ENCODE measurements at regions of chr10 and their contacts with region 1.

Region 1: GRCh38 chr10:112026438-112026837 is 157.1 kb downstream of the GPAM start:
- DNase-seq: no peak
- H3K4me3 ChIP-seq: no peak overlapping the region
- H3K27ac ChIP-seq: no peak overlapping the region
- H3K4me1 ChIP-seq: no peaks in the 10 kb centered on the region
- H3K27me3 ChIP-seq: no peaks in the 10 kb centered on the region
- CTCF ChIP-seq: peak in 2 of 3 experiments; percentile 57 to 61; a peak in 3 of 4 replicates
- EP300 ChIP-seq: no peak
- POLR2A ChIP-seq: no peak
- RAD21 ChIP-seq: peak; percentile 38 to 61; a peak in 3 of 4 replicates

Region 2: DNA sequence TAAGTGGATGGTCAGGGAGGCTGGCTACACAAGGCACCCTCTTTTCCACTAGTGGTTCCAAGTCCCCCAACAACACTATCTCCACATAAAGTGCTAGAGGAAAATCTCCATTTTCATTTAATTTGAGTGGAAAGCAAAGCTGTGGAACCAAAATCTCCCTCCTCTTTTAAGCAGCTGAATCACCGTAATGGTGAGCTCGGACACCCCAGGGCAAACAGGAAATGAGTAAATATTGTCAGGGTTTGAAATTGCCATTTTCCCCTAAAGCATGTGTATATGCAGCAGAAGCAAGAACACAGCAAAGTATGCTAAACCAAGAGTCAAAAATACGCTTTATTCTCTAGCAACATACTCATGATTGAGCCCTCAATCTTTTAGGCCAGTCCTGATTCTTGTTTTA is 13.4 kb after region 1 on chr10:
- CTCF ChIA-PET with region 1: interaction called, 12 read pairs
- POLR2A ChIA-PET with region 1: no interaction called
- DNase-seq: no peak
- H3K4me3 ChIP-seq: no peak overlapping the region
- H3K27ac ChIP-seq: no peak overlapping the region
- H3K4me1 ChIP-seq: no peaks in the 10 kb centered on the region
- H3K27me3 ChIP-seq: no peaks in the 10 kb centered on the region
- CTCF ChIP-seq: no peak
- EP300 ChIP-seq: no peak
- POLR2A ChIP-seq: no peak
- RAD21 ChIP-seq: no peak

Measured in H1 (cell line).